ENCODE measurements at regions of chr14 and their contacts with region 1.

Region 1: GRCh38 chr14:20697273-20698017 is 8.9 kb downstream of the ANG start:
- DNase-seq: peak; percentile 81
- ATAC-seq: peak; percentile 86
- H3K4me3 ChIP-seq: no peak overlapping the region
- H3K4me3 Mint-ChIP-seq: no peak overlapping the region
- H3K27ac ChIP-seq: no peak overlapping the region
- H3K27ac Mint-ChIP-seq: no peak overlapping the region
- H3K4me1 ChIP-seq: no peaks in the 10 kb centered on the region
- H3K4me1 Mint-ChIP-seq: peaks cover 6% of the 10 kb centered on the region
- H3K27me3 ChIP-seq: no peaks in the 10 kb centered on the region
- H3K27me3 Mint-ChIP-seq: no peaks in the 10 kb centered on the region
- CTCF ChIP-seq: peak; percentile 88

Region 2: DNA sequence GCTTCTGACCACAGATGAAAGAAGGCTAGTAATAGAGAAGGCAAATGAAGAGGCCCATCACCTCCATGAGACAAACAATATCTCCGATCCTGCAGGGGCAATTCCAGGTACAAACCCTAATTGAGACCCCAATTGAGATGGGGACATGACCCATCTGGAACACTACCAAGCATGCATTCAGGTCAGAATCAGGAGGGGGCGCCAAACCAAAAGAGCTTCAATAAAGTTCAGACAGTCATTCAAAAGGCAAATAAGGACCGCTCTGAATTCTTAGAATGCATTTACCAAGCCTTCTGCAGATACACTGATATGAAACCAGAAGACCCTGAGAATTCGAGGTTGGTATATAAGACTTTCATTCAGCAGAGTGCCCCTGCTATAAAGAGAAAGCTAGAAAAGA is 60.5 kb after region 1 on chr14:
- CTCF ChIA-PET with region 1: interaction called, 17 read pairs
- POLR2A ChIA-PET with region 1: no interaction called
- intact Hi-C with region 1: loop called (anchors 1 kb)
- DNase-seq: peak; percentile 60
- ATAC-seq: peak; percentile 28
- H3K4me3 ChIP-seq: no peak overlapping the region
- H3K4me3 Mint-ChIP-seq: no peak overlapping the region
- H3K27ac ChIP-seq: no peak overlapping the region
- H3K27ac Mint-ChIP-seq: no peak overlapping the region
- H3K4me1 ChIP-seq: no peaks in the 10 kb centered on the region
- H3K4me1 Mint-ChIP-seq: peaks cover 4% of the 10 kb centered on the region
- H3K27me3 ChIP-seq: no peaks in the 10 kb centered on the region
- H3K27me3 Mint-ChIP-seq: peaks cover 4% of the 10 kb centered on the region
- CTCF ChIP-seq: peak; percentile 46

Region 3: DNA sequence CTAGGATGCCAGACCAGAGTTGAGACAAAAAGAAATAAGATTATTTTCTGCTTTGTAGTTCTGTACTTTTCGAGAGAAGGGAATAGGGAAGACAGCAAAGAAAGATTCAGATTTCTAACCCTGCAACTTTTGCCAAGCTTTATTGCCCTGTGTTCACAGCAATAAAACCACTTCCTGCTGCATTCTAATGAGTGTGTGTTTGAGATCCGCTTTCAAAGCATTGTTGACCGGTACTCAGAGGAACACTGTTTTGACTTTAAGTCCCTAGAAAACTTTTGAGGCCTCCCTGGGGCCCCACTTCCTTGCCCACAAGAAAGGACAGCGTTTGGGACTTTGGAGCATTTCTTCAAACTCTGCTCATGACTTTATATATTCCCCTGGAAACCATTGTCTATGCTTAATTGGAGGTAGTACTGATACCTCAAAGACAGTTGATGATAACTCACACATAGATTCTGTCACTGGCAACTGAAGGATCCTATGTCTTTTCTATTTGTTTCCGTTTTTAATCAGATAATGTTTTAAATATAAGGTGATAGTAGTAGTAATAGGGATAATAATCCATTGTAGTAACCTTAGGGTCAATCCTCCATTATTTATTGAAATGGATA is 84.9 kb after region 1 on chr14:
- CTCF ChIA-PET with region 1: interaction called, 27 read pairs
- POLR2A ChIA-PET with region 1: no interaction called
- intact Hi-C with region 1: no loop called
- DNase-seq: peak; percentile 59
- ATAC-seq: peak; percentile 46
- H3K4me3 ChIP-seq: peak overlapping the region; percentile 65 to 90 (median 80)
- H3K4me3 Mint-ChIP-seq: peak overlapping the region; percentile 97
- H3K27ac ChIP-seq: peak overlapping the region; percentile 76 to 84
- H3K27ac Mint-ChIP-seq: peak overlapping the region; percentile 92
- H3K4me1 ChIP-seq: peaks cover 39 to 43% of the 10 kb centered on the region in 2 donors
- H3K4me1 Mint-ChIP-seq: peaks cover 53% of the 10 kb centered on the region
- H3K27me3 ChIP-seq: no peaks in the 10 kb centered on the region
- H3K27me3 Mint-ChIP-seq: no peaks in the 10 kb centered on the region
- CTCF ChIP-seq: no peak

Region 4: DNA sequence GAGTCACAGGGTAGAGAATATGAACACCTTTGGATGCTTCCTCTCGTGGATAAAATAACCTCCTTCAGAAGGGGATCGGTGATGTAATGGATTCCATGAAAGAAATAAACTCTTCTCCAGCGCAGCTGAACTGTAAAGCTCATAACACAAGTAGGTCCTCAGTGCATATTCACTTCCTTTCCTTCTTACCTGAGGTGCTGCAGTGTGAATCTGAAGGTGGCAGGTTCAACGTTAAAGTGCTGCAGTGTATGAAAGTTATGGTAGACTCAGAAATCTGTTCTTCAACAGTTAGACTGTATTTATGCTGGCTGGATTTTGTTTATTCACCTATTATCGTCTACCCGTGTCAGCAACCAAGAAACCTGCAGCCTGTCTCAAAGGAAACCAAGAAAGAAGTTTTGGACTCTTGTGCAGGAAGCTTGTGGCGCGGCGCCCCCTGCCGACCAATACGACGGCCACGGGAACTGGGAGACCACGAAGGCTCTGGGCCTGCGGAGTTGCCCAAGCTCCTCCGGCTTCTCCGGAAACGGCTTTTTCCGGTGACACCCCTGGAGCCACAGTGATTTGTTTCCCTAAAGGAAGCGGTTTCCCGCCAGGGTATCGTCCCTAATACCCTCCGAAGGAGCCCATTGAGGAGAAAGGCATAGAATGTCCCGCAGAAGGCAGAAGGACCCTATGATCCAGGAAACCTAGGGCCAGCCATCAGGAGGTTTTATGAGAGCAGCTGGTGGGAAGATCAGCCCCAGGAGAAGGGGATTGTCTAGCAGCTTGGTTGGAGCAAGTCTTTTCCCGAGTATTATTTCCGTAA is 176.1 kb after region 1 on chr14:
- CTCF ChIA-PET with region 1: interaction called, 90 read pairs
- POLR2A ChIA-PET with region 1: no interaction called
- intact Hi-C with region 1: loop called (anchors 1 kb)
- DNase-seq: peak; percentile 77
- ATAC-seq: peak; percentile 56
- H3K4me3 ChIP-seq: peak overlapping the region in 1 of 5 experiments; percentile 26
- H3K4me3 Mint-ChIP-seq: peak overlapping the region; percentile 54
- H3K27ac ChIP-seq: no peak overlapping the region
- H3K27ac Mint-ChIP-seq: no peak overlapping the region
- H3K4me1 ChIP-seq: peaks cover 6 to 9% of the 10 kb centered on the region in 2 donors
- H3K4me1 Mint-ChIP-seq: peaks cover 13% of the 10 kb centered on the region
- H3K27me3 ChIP-seq: peaks cover 0 to 17% (median 2%) of the 10 kb centered on the region in 4 experiments
- H3K27me3 Mint-ChIP-seq: peaks cover 37% of the 10 kb centered on the region
- CTCF ChIP-seq: peak; percentile 82

Measured in B cell (primary cell).